Endothelial cell of umbilical vein (primary cell): ENCODE measurements at regions of chr4 and their contacts with region 1.

Region 1: DNA sequence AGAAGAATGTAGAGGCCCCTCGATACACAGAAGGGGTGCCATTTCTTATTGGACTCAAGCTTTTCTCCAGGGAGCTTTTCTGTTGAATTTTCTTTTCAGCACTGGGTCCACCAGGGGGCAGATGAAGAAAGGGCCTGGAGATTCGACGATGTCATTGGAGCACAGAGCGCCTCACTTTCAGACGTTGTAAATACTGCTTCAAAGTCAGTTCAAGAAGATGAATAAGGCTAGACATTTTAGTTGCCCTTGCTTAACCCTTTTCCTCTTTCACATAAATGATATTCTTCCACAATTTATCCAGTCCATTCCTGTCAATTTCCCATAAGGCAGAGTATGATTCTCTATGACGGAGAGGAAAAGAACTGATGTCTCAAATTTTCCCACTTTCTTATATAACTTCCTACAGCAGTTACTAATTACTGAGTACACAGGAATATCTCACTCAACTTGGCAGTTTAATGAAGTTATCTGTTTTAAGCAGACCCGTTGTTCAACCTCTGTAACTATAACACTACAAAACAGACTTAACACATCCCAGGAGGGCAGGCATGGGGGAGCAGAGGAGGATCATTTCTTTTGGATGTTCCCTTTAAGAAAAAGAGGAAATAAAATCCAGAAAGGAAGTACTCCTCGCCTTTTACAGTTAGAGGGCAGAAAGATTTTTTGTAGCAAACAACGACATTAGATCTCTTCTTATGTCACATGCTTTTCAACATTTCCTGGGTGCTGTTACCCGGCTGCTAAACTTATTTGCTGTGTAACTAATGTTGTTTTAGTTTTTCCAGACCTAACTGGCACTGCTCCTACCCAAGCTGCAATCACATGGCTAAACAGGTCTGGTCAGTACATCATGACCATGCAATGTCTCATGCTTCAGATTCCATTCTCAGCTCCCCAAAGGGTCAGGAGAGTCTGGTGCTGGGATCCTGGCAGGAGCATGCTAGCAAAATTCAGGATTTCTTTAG is 12.2 kb upstream of the CENPU start:
- DNase-seq: peak; percentile 76
- H3K4me3 ChIP-seq: no peak overlapping the region
- H3K27ac ChIP-seq: no peak overlapping the region
- H3K4me1 ChIP-seq: peaks cover 4% of the 10 kb centered on the region
- H3K27me3 ChIP-seq: no peaks in the 10 kb centered on the region
- CTCF ChIP-seq: peak; percentile 70 to 72
- POLR2A ChIP-seq: no peak

Region 2: DNA sequence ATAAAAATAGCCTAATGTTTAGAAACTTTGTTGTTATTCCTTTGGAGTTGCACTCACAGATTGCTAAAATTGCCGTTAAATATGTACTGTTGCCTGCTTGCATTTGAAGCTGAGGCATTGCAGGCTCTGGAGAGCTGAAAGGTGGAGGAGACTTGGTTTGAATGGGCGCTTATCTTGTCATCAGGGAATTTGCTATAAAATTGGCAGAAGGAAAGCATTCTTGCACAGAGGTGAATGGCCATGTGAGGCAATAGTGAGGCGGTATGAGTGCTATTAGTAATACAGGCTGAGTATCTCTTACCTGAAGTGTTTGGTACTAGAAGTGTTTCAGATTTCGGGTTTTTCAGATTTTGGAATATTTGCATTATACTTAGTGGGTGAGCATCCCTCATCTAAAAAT is 1045.7 kb before region 1 on chr4:
- CTCF ChIA-PET with region 1: no interaction called
- POLR2A ChIA-PET with region 1: no interaction called
- dilution Hi-C with region 1: no loop called
- intact Hi-C with region 1: no loop called
- DNase-seq: no peak
- H3K4me3 ChIP-seq: no peak overlapping the region
- H3K27ac ChIP-seq: no peak overlapping the region
- H3K4me1 ChIP-seq: no peaks in the 10 kb centered on the region
- H3K27me3 ChIP-seq: no peaks in the 10 kb centered on the region
- CTCF ChIP-seq: no peak
- POLR2A ChIP-seq: no peak

Region 3: GRCh38 chr4:184733654-184734524 is 12.2 kb before region 1 on chr4 and contains the start of gene CENPU:
- CTCF ChIA-PET with region 1: interaction called, 32 read pairs
- POLR2A ChIA-PET with region 1: interaction called, 4 read pairs
- dilution Hi-C with region 1: no loop called
- intact Hi-C with region 1: no loop called
- DNase-seq: peak; percentile 99
- H3K4me3 ChIP-seq: peak within 1 kb of the TSS; percentile 75 to 91 (median 88)
- H3K27ac ChIP-seq: peak within 1 kb of the TSS; percentile 72
- H3K4me1 ChIP-seq: peaks cover 16% of the 10 kb centered on the region
- H3K27me3 ChIP-seq: no peaks in the 10 kb centered on the region
- CTCF ChIP-seq: no peak
- POLR2A ChIP-seq: peak; percentile 68
- total RNA-seq, gene CENPU: 35.6 and 37.9 TPM in 2 replicates

Region 4: DNA sequence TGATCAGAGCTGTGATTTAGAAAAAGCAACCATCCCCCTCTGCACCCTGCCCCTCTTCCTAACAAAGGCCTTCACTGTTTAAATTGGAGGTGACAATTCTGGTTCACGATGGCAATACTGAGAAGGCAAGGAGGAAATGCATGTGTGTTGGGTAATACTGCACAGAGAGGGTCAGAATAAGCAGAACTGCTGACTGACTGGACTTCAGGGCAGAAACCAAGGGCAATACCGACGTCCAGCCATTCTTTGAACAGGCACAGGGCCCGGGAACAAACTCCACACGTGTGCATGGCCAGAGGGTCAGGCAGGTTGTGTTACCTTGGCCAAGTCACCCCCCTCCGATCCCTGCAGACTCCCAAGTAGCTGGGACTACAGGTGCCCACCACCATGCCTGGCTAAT is 73.7 kb after region 1 on chr4:
- CTCF ChIA-PET with region 1: interaction called, 18 read pairs
- POLR2A ChIA-PET with region 1: no interaction called
- dilution Hi-C with region 1: no loop called
- intact Hi-C with region 1: no loop called
- DNase-seq: no peak
- H3K4me3 ChIP-seq: no peak overlapping the region
- H3K27ac ChIP-seq: no peak overlapping the region
- H3K4me1 ChIP-seq: peaks cover 4% of the 10 kb centered on the region
- H3K27me3 ChIP-seq: no peaks in the 10 kb centered on the region
- CTCF ChIP-seq: no peak
- POLR2A ChIP-seq: no peak

Region 5: GRCh38 chr4:184899261-184900134 is 153.4 kb after region 1 on chr4:
- CTCF ChIA-PET with region 1: interaction called, 4 read pairs
- POLR2A ChIA-PET with region 1: no interaction called
- dilution Hi-C with region 1: no loop called
- intact Hi-C with region 1: loop called (anchors 10 kb)
- DNase-seq: no peak
- H3K4me3 ChIP-seq: no peak overlapping the region
- H3K27ac ChIP-seq: no peak overlapping the region
- H3K4me1 ChIP-seq: no peaks in the 10 kb centered on the region
- H3K27me3 ChIP-seq: no peaks in the 10 kb centered on the region
- CTCF ChIP-seq: no peak
- POLR2A ChIP-seq: no peak

Region 6: DNA sequence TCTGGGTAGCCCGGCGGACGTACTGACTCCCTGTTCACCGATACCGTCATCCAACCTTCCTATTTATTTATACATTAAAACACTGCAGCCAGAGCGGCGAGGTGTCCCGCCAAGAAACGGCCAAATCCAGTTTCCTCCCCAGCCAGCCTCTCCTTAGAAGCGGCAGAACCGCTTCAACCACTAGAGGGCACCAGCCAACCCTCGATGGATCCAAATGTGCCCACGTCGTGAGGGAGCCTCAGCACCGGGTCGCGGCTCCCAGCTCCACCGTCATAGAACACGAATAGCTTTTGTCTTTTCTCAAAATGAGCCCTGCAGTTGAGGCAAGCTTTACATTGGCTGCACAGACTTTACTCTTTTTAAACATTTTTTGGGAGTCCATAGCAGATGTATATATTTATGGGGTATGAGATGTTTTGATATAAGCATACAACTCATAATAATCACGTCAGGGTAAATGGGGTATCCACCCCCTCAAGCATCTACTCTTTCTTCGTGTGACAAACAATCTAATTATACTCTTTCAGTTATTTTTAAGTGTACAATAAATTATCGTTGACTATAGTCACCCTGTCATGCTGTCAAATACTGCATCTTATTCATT is 259.2 kb after region 1 on chr4:
- CTCF ChIA-PET with region 1: interaction called, 23 read pairs
- POLR2A ChIA-PET with region 1: no interaction called
- dilution Hi-C with region 1: no loop called
- intact Hi-C with region 1: loop called (anchors 2 kb)
- DNase-seq: peak; percentile 68
- H3K4me3 ChIP-seq: no peak overlapping the region
- H3K27ac ChIP-seq: no peak overlapping the region
- H3K4me1 ChIP-seq: no peaks in the 10 kb centered on the region
- H3K27me3 ChIP-seq: peaks cover 0 to 8% of the 10 kb centered on the region in 2 experiments
- CTCF ChIP-seq: peak; percentile 94 to 96
- POLR2A ChIP-seq: no peak

Region 7: DNA sequence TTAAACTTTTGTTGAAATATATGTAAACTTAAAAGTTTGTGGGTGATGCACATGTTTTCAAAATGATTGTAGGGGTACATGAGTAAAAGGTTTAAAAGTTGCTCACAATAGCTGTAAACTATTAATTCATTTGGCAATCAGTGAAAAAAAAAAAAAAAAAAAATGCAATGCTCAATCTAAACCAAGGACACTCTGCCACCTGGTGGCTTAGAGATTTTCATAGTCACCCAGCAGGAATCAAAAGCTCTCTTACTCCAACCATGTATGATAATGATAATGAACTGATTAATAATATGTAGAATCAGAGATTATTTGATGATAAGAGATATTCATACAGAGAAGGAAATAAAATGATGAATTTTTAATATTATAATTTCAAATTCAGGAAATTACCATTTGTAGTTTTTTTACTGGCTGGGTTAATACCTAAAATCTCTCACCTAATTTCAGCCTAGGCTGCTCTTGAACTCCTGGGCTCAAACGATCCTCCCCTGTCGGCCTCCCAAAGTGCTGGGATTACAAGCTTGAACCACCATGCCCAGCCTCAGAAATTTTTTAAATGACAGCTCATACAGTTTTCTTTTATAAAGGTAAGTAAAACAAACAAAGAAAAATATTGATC is 350.0 kb after region 1 on chr4:
- CTCF ChIA-PET with region 1: interaction called, 37 read pairs
- POLR2A ChIA-PET with region 1: no interaction called
- dilution Hi-C with region 1: no loop called
- intact Hi-C with region 1: loop called (anchors 1 kb)
- DNase-seq: peak; percentile 49
- H3K4me3 ChIP-seq: no peak overlapping the region
- H3K27ac ChIP-seq: no peak overlapping the region
- H3K4me1 ChIP-seq: no peaks in the 10 kb centered on the region
- H3K27me3 ChIP-seq: peaks cover 2 to 11% of the 10 kb centered on the region in 2 experiments
- CTCF ChIP-seq: peak; percentile 31 to 39
- POLR2A ChIP-seq: no peak